K562 (cell line): ENCODE measurements at regions of chr2 and their contacts with region 1.

Region 1: DNA sequence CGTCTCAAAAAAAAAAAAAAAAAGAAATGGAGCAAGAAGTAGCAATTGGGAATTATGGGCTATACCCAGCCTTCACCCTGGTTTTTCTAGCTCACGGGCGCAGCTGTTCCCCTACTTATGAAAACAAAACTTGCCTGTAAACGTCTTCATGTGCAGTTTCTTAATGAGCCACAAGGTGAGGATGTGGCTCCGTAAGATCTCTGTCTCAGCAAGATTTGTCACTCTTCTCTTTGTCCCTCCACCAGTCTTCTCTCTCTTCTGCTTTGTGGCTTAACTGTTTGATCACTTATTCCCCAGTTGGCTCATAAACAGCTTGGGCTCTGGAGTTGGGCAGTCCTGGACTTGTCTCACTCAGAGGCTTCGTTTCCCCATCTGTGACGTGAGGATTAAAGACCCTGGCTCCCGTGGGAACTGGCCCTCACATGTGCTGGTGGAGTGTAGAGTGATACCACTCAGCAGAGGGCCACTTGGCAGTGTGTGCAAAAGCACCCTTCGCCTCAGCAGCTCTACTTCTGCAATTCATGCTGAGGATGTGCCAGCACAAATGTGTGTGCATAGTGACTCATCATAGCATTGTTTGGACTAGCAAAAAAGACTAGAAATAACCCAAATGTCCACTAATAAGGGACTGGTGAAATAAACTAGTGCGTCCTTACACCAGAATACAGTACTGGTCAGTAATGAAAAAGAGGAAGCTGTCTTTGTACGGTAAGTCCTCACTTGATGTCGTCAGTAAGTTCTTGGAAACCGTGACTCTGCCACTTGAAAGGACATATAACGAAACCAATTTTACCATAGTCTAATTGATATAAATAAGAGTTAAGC is 8.7 kb downstream of the CEP68 start:
- DNase-seq: peak; percentile 51 to 79 (median 57)
- ATAC-seq: peak; percentile 81
- H3K4me3 ChIP-seq: no peak overlapping the region
- H3K27ac ChIP-seq: peak overlapping the region; percentile 76
- H3K4me1 ChIP-seq: peaks cover 23 to 36% of the 10 kb centered on the region in 2 experiments
- H3K27me3 ChIP-seq: no peaks in the 10 kb centered on the region
- CTCF ChIP-seq: peak; percentile 80 to 90 (median 84)
- EP300 ChIP-seq: 0 out of 2 replicates have a peak, but pooled peaks have one; percentile 9
- POLR2A ChIP-seq: no peak
- RAD21 ChIP-seq: peak; percentile 80 to 93

Region 2: GRCh38 chr2:65142515-65142914 is 77.6 kb after region 1 on chr2:
- CTCF ChIA-PET with region 1: no interaction called
- POLR2A ChIA-PET with region 1: no interaction called
- in situ Hi-C with region 1: no loop called
- intact Hi-C with region 1: loop called (anchors 2 kb)
- DNase-seq: no peak
- ATAC-seq: peak; percentile 71
- H3K4me3 ChIP-seq: no peak overlapping the region
- H3K27ac ChIP-seq: no peak overlapping the region
- H3K4me1 ChIP-seq: no peaks in the 10 kb centered on the region; a peak in 2 of 5 replicates
- H3K27me3 ChIP-seq: no peaks in the 10 kb centered on the region
- CTCF ChIP-seq: peak; percentile 18 to 43 (median 30); a peak in 4 of 6 replicates
- EP300 ChIP-seq: no peak
- POLR2A ChIP-seq: no peak
- RAD21 ChIP-seq: peak in 1 of 2 experiments; percentile 36; a peak in 1 of 4 replicates

Region 3: GRCh38 chr2:65186872-65187851 is 122.2 kb after region 1 on chr2:
- CTCF ChIA-PET with region 1: interaction called, 16 read pairs
- POLR2A ChIA-PET with region 1: no interaction called
- in situ Hi-C with region 1: loop called (anchors 5 kb)
- intact Hi-C with region 1: loop called (anchors 1 kb)
- DNase-seq: peak; percentile 80 to 87 (median 82)
- ATAC-seq: peak; percentile 99
- H3K4me3 ChIP-seq: no peak overlapping the region
- H3K27ac ChIP-seq: no peak overlapping the region
- H3K4me1 ChIP-seq: peaks cover 3 to 4% of the 10 kb centered on the region in 2 experiments; a peak in 2 of 5 replicates
- H3K27me3 ChIP-seq: no peaks in the 10 kb centered on the region
- CTCF ChIP-seq: peak; percentile 83 to 90 (median 87)
- EP300 ChIP-seq: no peak
- POLR2A ChIP-seq: no peak
- RAD21 ChIP-seq: peak; percentile 71 to 89

Region 4: DNA sequence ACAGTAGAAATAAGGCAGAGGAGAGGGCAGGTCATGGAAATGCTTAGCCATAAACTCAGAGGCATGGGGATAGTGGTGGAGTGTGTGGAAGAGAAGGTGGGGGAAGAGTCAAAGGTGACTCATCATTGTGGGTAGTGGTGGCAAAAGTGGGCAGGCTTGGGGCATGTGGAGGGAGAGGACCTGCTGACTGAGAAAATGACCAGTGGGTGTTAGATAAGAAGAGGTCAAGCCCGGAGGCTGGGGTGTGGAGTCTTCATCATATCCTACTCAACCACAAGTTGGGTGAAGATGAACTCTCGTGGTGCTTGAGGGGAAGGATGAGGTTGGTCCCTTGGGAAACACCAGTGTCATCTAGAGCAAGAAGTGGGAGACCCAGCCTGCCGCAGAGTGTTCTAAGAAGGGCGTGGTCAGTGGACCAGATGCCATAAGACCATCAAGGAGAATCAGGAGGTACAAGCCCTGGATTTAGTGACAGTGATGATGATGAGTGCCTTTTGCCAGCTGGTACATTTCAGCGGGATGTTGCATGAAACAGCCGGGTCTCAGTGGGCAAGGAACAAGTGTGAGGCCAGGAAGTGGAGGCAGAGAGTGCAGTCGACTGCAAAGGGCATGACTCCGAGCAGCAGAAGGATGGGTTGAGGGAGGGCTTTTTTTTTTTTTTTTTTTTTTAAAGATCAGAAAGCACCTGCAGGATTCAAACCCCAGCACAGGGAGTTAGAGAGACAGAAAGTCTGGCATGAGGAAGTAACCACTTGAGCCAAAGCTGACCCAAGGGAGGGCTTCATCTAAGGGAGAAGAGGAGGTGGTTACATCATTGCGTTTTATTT is 490.0 kb after region 1 on chr2:
- CTCF ChIA-PET with region 1: no interaction called
- POLR2A ChIA-PET with region 1: no interaction called
- in situ Hi-C with region 1: no loop called
- intact Hi-C with region 1: loop called (anchors 5 kb)
- DNase-seq: peak in 3 of 4 experiments; percentile 23 to 50 (median 30)
- ATAC-seq: no peak
- H3K4me3 ChIP-seq: no peak overlapping the region
- H3K27ac ChIP-seq: no peak overlapping the region
- H3K4me1 ChIP-seq: peaks cover 11 to 14% of the 10 kb centered on the region in 2 experiments; a peak in 4 of 5 replicates
- H3K27me3 ChIP-seq: no peaks in the 10 kb centered on the region
- CTCF ChIP-seq: no peak
- EP300 ChIP-seq: no peak
- POLR2A ChIP-seq: no peak
- RAD21 ChIP-seq: no peak